ENCODE measurements at regions of chr19 and their contacts with region 1.

Region 1: GRCh38 chr19:11482384-11483050 is 1.7 kb upstream of the ELAVL3 start:
- DNase-seq: peak; percentile 93
- ATAC-seq: peak; percentile 64
- H3K4me3 Mint-ChIP-seq: peak overlapping the region; percentile 66
- H3K27ac Mint-ChIP-seq: peak overlapping the region; percentile 78
- H3K4me1 Mint-ChIP-seq: peaks cover 17% of the 10 kb centered on the region
- H3K27me3 Mint-ChIP-seq: peaks cover 20% of the 10 kb centered on the region

Region 2: GRCh38 chr19:11137542-11138384 is 344.8 kb before region 1 on chr19:
- CTCF ChIA-PET with region 1: no interaction called
- POLR2A ChIA-PET with region 1: no interaction called
- intact Hi-C with region 1: loop called in 1 of 2 experiments (anchors 1 kb)
- DNase-seq: peak; percentile 72
- ATAC-seq: peak; percentile 80
- H3K4me3 Mint-ChIP-seq: peak overlapping the region; percentile 52
- H3K27ac Mint-ChIP-seq: no peak overlapping the region
- H3K4me1 Mint-ChIP-seq: peaks cover 11% of the 10 kb centered on the region
- H3K27me3 Mint-ChIP-seq: no peaks in the 10 kb centered on the region

Region 3: GRCh38 chr19:11293433-11294389 is 188.8 kb before region 1 on chr19:
- CTCF ChIA-PET with region 1: interaction called, 3 read pairs
- POLR2A ChIA-PET with region 1: no interaction called
- intact Hi-C with region 1: loop called (anchors 1 to 5 kb)
- DNase-seq: peak; percentile 89
- ATAC-seq: peak; percentile 99
- H3K4me3 Mint-ChIP-seq: peak overlapping the region; percentile 38
- H3K27ac Mint-ChIP-seq: no peak overlapping the region
- H3K4me1 Mint-ChIP-seq: peaks cover 2% of the 10 kb centered on the region
- H3K27me3 Mint-ChIP-seq: peaks cover 27% of the 10 kb centered on the region

Region 4: GRCh38 chr19:11374433-11375142 is 107.9 kb before region 1 on chr19 and contains the start of gene SWSAP1:
- CTCF ChIA-PET with region 1: interaction called, 16 read pairs
- POLR2A ChIA-PET with region 1: interaction called, 4 read pairs
- intact Hi-C with region 1: loop called in 1 of 2 experiments (anchors 1 kb)
- DNase-seq: peak; percentile 98
- ATAC-seq: peak; percentile 92
- H3K4me3 Mint-ChIP-seq: no peak within 1 kb of the TSS
- H3K27ac Mint-ChIP-seq: no peak within 1 kb of the TSS
- H3K4me1 Mint-ChIP-seq: peaks cover 28% of the 10 kb centered on the region
- H3K27me3 Mint-ChIP-seq: no peaks in the 10 kb centered on the region
- total RNA-seq, gene SWSAP1: 1.5 to 1.7 TPM

Region 5: GRCh38 chr19:11528551-11529341 is 46.2 kb after region 1 on chr19 and contains the start of gene ECSIT:
- CTCF ChIA-PET with region 1: interaction called, 10 read pairs
- POLR2A ChIA-PET with region 1: no interaction called
- intact Hi-C with region 1: loop called (anchors 1 to 2 kb)
- DNase-seq: peak; percentile 97
- ATAC-seq: peak; percentile 97
- H3K4me3 Mint-ChIP-seq: peak within 1 kb of the TSS; percentile 99
- H3K27ac Mint-ChIP-seq: peak within 1 kb of the TSS; percentile 96
- H3K4me1 Mint-ChIP-seq: peaks cover 28% of the 10 kb centered on the region
- H3K27me3 Mint-ChIP-seq: no peaks in the 10 kb centered on the region
- total RNA-seq, gene ECSIT: 37.2 to 44.6 TPM

Region 6: GRCh38 chr19:11547929-11548700 is 65.6 kb after region 1 on chr19:
- CTCF ChIA-PET with region 1: no interaction called
- POLR2A ChIA-PET with region 1: no interaction called
- intact Hi-C with region 1: no loop called
- DNase-seq: no peak
- ATAC-seq: no peak
- H3K4me3 Mint-ChIP-seq: no peak overlapping the region
- H3K27ac Mint-ChIP-seq: no peak overlapping the region
- H3K4me1 Mint-ChIP-seq: no peaks in the 10 kb centered on the region
- H3K27me3 Mint-ChIP-seq: no peaks in the 10 kb centered on the region

Region 7: DNA sequence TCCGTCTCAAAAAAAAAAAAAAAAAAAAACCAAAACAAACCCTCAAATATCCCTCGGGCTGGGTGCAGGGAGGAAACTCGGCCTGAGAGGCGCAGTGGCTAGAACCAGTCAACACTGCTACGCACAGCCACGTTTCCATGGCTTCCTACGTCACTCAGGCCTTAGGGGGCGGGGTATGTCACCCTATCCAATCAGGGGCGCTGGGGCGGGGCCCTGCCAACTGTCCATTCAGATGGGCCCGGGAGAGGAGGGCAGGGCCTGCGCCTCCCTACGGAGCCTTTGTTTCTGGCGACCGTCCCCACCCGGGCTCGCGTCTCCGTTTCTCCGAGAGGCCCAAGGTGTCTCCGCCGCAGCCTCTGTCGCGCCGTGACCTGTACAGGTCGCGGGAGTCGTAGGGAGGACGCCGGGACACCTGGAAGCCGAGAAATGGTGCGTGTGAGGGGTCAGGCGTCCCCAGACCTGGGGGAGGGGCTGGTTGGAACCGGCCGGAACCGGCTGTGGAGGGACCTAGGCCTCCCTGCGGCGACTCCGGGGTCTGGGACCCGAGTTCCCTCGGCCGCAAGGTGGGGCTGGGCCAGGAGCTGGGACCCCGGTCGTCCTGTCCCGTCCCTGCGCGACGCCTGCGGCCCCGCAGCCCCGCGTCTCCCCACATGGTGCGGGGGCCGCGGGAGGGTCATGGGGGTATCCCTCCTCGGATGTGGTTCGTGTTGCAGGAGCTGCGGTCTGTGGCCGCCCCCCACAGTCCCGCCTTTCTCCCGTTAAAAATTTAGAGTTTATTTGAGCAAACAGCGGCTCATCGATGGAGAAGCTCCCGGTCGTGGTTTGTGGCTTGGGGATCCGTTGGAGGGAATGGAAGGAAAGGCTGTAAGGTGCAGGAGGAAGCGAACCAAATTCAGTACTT is 114.9 kb after region 1 on chr19 and contains the start of gene ZNF627:
- CTCF ChIA-PET with region 1: interaction called, 4 read pairs
- POLR2A ChIA-PET with region 1: no interaction called
- intact Hi-C with region 1: loop called in 1 of 2 experiments (anchors 1 kb)
- DNase-seq: peak; percentile 99
- ATAC-seq: peak; percentile 100
- H3K4me3 Mint-ChIP-seq: peak within 1 kb of the TSS; percentile 97
- H3K27ac Mint-ChIP-seq: peak within 1 kb of the TSS; percentile 91
- H3K4me1 Mint-ChIP-seq: peaks cover 34% of the 10 kb centered on the region
- H3K27me3 Mint-ChIP-seq: no peaks in the 10 kb centered on the region
- total RNA-seq, gene ZNF627: 6.4 to 6.7 TPM

Measured in activated CD4-positive, alpha-beta T cell treated with anti-CD3 and anti-CD28 coated beads for 36 hours (primary cell).